K562 (cell line): ENCODE measurements at regions of chr2 and their contacts with region 1.

Region 1: GRCh38 chr2:128232965-128233789 is 85.5 kb downstream of the HS6ST1 start:
- DNase-seq: peak; percentile 83 to 89 (median 88)
- ATAC-seq: peak; percentile 100
- H3K4me3 ChIP-seq: no peak overlapping the region
- H3K27ac ChIP-seq: no peak overlapping the region
- H3K4me1 ChIP-seq: peaks cover 0 to 17% of the 10 kb centered on the region in 2 experiments; a peak in 2 of 5 replicates
- H3K27me3 ChIP-seq: peaks cover 7 to 24% of the 10 kb centered on the region in 2 experiments; a peak in 3 of 5 replicates
- CTCF ChIP-seq: peak; percentile 84 to 90 (median 84)
- EP300 ChIP-seq: no peak
- POLR2A ChIP-seq: no peak
- RAD21 ChIP-seq: peak; percentile 70 to 82

Region 2: GRCh38 chr2:127857265-127857808 is 375.8 kb before region 1 on chr2:
- CTCF ChIA-PET with region 1: no interaction called
- POLR2A ChIA-PET with region 1: no interaction called
- in situ Hi-C with region 1: no loop called
- intact Hi-C with region 1: loop called (anchors 5 kb)
- DNase-seq: peak in 2 of 4 experiments; percentile 34 to 43
- ATAC-seq: peak; percentile 31
- H3K4me3 ChIP-seq: peak overlapping the region; percentile 70
- H3K27ac ChIP-seq: peak overlapping the region; percentile 85
- H3K4me1 ChIP-seq: peaks cover 28 to 29% of the 10 kb centered on the region in 2 experiments
- H3K27me3 ChIP-seq: no peaks in the 10 kb centered on the region
- CTCF ChIP-seq: no peak
- EP300 ChIP-seq: no peak
- POLR2A ChIP-seq: no peak
- RAD21 ChIP-seq: no peak

Region 3: GRCh38 chr2:128062571-128062970 is 170.6 kb before region 1 on chr2:
- CTCF ChIA-PET with region 1: interaction called, 3 read pairs
- POLR2A ChIA-PET with region 1: no interaction called
- in situ Hi-C with region 1: loop called (anchors 10 kb)
- intact Hi-C with region 1: loop called (anchors 2 kb)
- DNase-seq: no peak
- ATAC-seq: no peak
- H3K4me3 ChIP-seq: no peak overlapping the region
- H3K27ac ChIP-seq: no peak overlapping the region
- H3K4me1 ChIP-seq: no peaks in the 10 kb centered on the region; a peak in 1 of 5 replicates
- H3K27me3 ChIP-seq: no peaks in the 10 kb centered on the region; a peak in 1 of 5 replicates
- CTCF ChIP-seq: no peak
- EP300 ChIP-seq: no peak
- POLR2A ChIP-seq: no peak
- RAD21 ChIP-seq: no peak

Region 4: GRCh38 chr2:128069769-128070168 is 163.4 kb before region 1 on chr2:
- CTCF ChIA-PET with region 1: no interaction called
- POLR2A ChIA-PET with region 1: no interaction called
- in situ Hi-C with region 1: loop called (anchors 10 kb)
- intact Hi-C with region 1: no loop called
- DNase-seq: no peak
- ATAC-seq: no peak
- H3K4me3 ChIP-seq: no peak overlapping the region
- H3K27ac ChIP-seq: no peak overlapping the region
- H3K4me1 ChIP-seq: no peaks in the 10 kb centered on the region; a peak in 1 of 5 replicates
- H3K27me3 ChIP-seq: no peaks in the 10 kb centered on the region
- CTCF ChIP-seq: no peak
- EP300 ChIP-seq: no peak
- POLR2A ChIP-seq: no peak
- RAD21 ChIP-seq: no peak

Region 5: DNA sequence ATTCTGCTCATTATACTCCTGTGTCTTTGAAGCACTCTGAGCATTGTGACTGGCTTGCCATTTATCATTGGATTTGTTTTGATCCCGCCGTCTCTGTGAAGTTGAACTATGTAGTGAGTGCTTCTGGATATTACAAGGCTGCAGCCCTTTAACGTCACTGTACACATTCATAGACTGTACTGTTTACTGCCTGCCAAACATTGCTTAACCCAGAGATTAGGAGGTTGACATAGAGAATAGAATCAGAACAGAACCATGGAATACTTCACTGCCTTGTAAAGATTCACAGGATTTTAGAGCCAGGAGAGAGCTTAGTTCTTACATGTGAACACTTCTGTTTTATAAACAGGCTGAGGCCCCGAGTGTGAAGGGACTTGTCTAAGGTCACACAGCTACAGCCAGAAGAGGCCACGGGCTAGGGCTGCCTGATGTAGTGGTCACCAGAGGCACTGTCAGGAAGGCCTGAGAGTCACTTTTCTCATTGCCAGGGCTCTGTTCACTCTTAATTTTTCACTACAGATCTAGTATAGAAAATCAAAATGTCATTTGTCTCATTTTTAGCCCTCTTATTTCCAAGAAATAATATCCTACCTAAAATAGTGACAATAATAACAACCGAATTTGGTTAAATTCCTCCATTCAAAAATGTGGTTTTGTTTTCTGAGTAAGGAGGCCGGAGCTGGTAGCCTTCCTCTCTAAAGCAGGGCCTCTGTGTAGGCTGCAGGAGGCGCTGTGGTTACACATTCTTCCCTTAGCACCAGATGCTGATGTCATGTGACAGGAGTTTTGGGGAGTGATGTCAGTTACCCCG is 54.3 kb before region 1 on chr2:
- CTCF ChIA-PET with region 1: interaction called, 7 read pairs
- POLR2A ChIA-PET with region 1: no interaction called
- in situ Hi-C with region 1: no loop called
- intact Hi-C with region 1: loop called (anchors 5 kb)
- DNase-seq: peak; percentile 49 to 75 (median 68)
- ATAC-seq: peak; percentile 96
- H3K4me3 ChIP-seq: no peak overlapping the region
- H3K27ac ChIP-seq: no peak overlapping the region
- H3K4me1 ChIP-seq: no peaks in the 10 kb centered on the region; a peak in 1 of 5 replicates
- H3K27me3 ChIP-seq: no peaks in the 10 kb centered on the region
- CTCF ChIP-seq: peak; percentile 70 to 87 (median 86)
- EP300 ChIP-seq: no peak
- POLR2A ChIP-seq: no peak
- RAD21 ChIP-seq: peak; percentile 72 to 78